ENCODE measurements at regions of chr17 and their contacts with region 1.

Region 1: DNA sequence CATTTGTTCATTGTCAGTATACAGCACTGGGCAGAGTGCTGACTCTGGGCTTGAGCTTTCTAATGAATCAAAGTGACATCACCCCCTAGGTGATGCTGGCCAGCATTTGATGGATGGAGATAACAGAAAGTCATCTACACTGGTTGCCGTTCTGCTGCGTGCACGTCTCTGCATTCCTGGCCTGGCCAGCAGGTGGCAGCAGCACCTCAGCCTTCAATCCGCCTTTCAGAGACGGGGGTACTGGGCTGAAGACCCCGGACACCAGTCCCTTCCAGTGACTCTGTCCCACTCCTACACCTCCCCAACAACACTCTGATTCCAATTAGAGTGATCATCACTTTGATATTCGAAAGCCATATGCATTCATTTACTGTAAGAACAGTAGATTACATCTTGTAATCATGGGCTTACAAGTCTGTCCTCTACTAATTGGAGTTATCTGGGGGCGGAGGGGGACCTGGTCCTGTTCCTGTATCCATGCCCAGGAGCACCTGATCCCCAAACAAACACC is 6.0 kb downstream of the CPSF4L start:
- DNase-seq: no peak
- H3K4me3 ChIP-seq: no peak overlapping the region
- H3K27ac ChIP-seq: no peak overlapping the region
- H3K27me3 ChIP-seq: no peaks in the 10 kb centered on the region
- CTCF ChIP-seq: peak; percentile 97

Region 2: GRCh38 chr17:73231841-73232586 is 23.7 kb before region 1 on chr17:
- CTCF ChIA-PET with region 1: interaction called, 19 read pairs
- POLR2A ChIA-PET with region 1: no interaction called
- DNase-seq: peak; percentile 88
- H3K4me3 ChIP-seq: peak overlapping the region; percentile 90
- H3K27ac ChIP-seq: peak overlapping the region; percentile 39
- H3K27me3 ChIP-seq: no peaks in the 10 kb centered on the region
- CTCF ChIP-seq: peak; percentile 28; the same call in 1 of the 2 replicates

Region 3: GRCh38 chr17:73288515-73289302 is 33.0 kb after region 1 on chr17:
- CTCF ChIA-PET with region 1: interaction called, 11 read pairs
- POLR2A ChIA-PET with region 1: no interaction called
- DNase-seq: no peak
- H3K4me3 ChIP-seq: no peak overlapping the region
- H3K27ac ChIP-seq: no peak overlapping the region
- H3K27me3 ChIP-seq: no peaks in the 10 kb centered on the region
- CTCF ChIP-seq: no peak

Region 4: GRCh38 chr17:73311781-73312641 is 56.3 kb after region 1 on chr17 and contains the start of gene CDC42EP4:
- CTCF ChIA-PET with region 1: interaction called, 12 read pairs
- POLR2A ChIA-PET with region 1: interaction called, 3 read pairs
- DNase-seq: no peak
- H3K4me3 ChIP-seq: peak within 1 kb of the TSS; percentile 93
- H3K27ac ChIP-seq: peak within 1 kb of the TSS; percentile 90
- H3K27me3 ChIP-seq: no peaks in the 10 kb centered on the region
- CTCF ChIP-seq: no peak
- polyA plus RNA-seq, gene CDC42EP4: 21.9 and 23.1 TPM in 2 replicates

Region 5: GRCh38 chr17:73359987-73360410 is 104.3 kb after region 1 on chr17:
- CTCF ChIA-PET with region 1: interaction called, 449 read pairs
- POLR2A ChIA-PET with region 1: no interaction called
- DNase-seq: no peak
- H3K4me3 ChIP-seq: no peak overlapping the region
- H3K27ac ChIP-seq: no peak overlapping the region
- H3K27me3 ChIP-seq: peaks cover 19% of the 10 kb centered on the region
- CTCF ChIP-seq: no peak

Measured in AG04450 (cell line).